Activated naive CD8-positive, alpha-beta T cell treated with anti-CD3 and anti-CD28 coated beads, Interleukin-2, amount 10 ng/mL, durations not matched to agents 7 days and 5 days (primary cell): ENCODE measurements at regions of chr17 and their contacts with region 1.

Region 1: DNA sequence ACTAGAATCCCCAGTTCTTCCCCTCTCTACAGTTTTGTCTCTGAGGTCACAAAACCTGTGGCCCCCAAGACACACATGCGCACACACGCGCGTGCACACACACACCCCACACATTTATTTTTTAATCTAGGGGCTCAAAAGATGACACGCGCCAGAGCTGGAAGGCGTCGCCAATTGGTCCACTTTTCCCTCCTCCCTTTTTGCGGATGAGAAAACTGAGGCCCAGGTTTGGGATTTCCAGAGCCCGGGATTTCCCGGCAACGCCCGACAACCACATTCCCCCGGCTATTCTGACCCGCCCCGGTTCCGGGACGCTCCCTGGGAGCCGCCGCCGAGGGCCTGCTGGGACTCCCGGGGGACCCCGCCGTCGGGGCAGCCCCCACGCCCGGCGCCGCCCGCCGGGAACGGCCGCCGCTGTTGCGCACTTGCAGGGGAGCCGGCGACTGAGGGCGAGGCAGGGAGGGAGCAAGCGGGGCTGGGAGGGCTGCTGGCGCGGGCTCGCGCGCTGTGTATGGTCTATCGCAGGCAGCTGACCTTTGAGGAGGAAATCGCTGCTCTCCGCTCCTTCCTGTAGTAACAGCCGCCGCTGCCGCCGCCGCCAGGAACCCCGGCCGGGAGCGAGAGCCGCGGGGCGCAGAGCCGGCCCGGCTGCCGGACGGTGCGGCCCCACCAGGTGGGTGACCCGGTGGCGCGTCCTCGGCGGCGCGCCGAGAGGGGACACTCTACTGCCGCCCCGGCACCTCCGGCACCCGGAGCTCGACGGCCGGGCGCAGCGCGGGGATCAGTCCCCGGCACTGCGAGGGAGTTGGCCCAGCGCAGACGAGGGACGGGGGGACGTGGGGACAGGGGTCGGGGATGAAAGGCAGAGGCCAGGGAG is at the start of gene STAT5A:
- DNase-seq: peak; percentile 85
- ATAC-seq: peak; percentile 84
- H3K4me3 Mint-ChIP-seq: peak within 1 kb of the TSS; percentile 91
- H3K27ac Mint-ChIP-seq: peak within 1 kb of the TSS; percentile 88
- H3K4me1 Mint-ChIP-seq: peaks cover 37% of the 10 kb centered on the region
- H3K27me3 Mint-ChIP-seq: no peaks in the 10 kb centered on the region
- total RNA-seq, gene STAT5A: 125 to 131 TPM

Region 2: DNA sequence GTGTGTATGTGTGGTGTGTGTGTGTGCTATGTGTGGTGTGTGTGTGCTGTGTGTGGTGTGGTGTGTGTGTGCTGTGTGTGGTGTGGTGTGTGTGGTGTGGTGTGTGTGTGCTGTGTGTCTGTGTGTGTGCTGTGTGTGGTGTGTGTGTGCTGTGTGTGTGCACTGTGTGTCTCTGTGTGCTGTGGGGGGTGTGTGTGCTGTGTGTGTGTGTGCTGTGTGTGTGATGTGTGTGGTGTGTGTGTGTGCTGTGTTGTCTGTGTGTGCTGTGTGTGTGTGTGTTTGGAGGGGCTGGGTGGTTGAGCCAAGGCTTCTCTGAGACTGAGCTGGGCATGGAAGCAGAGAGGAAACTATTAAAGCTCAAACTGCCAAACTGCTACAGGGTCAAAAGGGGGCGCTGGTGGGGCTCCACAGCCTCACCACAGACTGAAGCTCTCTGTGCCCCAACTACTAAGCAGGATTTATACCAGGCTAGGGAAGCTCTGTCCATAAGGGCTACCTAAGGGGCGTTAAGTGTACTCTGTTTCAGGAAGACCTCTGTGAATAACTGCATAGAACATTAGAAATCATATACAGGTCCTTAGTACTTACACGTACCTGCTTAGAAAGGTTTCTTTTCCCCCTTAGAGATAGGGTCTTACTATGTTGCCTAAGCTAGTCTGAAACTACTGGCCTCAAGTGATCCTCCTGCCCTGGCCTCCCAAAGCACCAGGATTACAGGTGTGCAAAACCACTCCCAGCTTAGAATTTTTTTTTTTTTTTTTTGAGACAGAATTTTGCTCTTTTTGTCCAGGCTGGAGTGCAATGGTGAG is 66.0 kb before region 1 on chr17:
- POLR2A ChIA-PET with region 1: interaction called, 21 read pairs
- DNase-seq: peak; percentile 59
- ATAC-seq: peak; percentile 87
- H3K4me3 Mint-ChIP-seq: no peak overlapping the region
- H3K27ac Mint-ChIP-seq: peak overlapping the region; percentile 71
- H3K4me1 Mint-ChIP-seq: peaks cover 7% of the 10 kb centered on the region
- H3K27me3 Mint-ChIP-seq: no peaks in the 10 kb centered on the region

Region 3: DNA sequence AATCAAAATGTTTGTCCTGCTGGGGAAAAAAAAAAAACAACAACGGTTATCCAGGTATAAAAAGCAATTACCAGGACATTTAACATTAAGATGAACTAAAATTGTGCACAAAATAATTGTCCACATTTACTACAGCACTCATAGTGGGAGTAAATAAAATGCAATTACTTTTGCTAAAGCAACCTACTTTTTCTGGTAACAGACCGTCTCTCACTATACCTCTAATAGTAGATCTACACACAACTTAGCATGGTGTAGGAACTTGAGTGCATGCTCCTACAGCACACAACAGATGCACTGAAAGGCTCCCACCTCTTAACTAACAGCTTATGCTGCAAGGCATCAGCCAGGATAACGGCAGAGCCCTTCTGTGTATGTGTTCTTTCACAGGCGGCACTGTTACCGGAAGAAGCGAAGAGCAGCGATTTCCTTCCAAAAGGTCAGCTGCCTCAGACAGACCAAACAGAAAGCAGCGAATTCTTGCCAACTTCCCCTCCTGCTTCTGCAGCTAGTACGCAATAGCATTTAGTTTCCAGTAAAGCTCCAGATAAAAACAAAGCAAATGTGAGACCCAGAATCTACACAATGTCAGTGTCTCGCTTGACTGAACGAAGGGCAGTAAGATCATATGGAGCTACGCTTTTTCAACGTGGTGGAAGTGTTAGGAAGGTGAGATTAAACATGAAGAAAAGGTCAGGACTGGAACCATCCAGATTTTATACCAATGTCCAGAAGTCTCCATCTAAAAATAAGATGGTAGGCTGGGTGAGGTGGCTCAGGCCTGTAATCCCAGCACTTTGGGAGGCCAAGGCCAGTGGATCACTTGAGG is 39.6 kb before region 1 on chr17:
- POLR2A ChIA-PET with region 1: interaction called, 37 read pairs
- DNase-seq: peak; percentile 59
- ATAC-seq: peak; percentile 96
- H3K4me3 Mint-ChIP-seq: peak overlapping the region; percentile 94
- H3K27ac Mint-ChIP-seq: peak overlapping the region; percentile 98
- H3K4me1 Mint-ChIP-seq: peaks cover 52% of the 10 kb centered on the region
- H3K27me3 Mint-ChIP-seq: no peaks in the 10 kb centered on the region

Region 4: GRCh38 chr17:42276359-42276608 is 11.9 kb before region 1 on chr17 and contains the start of gene STAT5B:
- POLR2A ChIA-PET with region 1: interaction called, 108 read pairs
- DNase-seq: peak; percentile 91
- ATAC-seq: peak; percentile 72
- H3K4me3 Mint-ChIP-seq: peak within 1 kb of the TSS; percentile 91
- H3K27ac Mint-ChIP-seq: peak within 1 kb of the TSS; percentile 91
- H3K4me1 Mint-ChIP-seq: peaks cover 41% of the 10 kb centered on the region
- H3K27me3 Mint-ChIP-seq: no peaks in the 10 kb centered on the region
- total RNA-seq, gene STAT5B: 131 to 134 TPM

Region 5: DNA sequence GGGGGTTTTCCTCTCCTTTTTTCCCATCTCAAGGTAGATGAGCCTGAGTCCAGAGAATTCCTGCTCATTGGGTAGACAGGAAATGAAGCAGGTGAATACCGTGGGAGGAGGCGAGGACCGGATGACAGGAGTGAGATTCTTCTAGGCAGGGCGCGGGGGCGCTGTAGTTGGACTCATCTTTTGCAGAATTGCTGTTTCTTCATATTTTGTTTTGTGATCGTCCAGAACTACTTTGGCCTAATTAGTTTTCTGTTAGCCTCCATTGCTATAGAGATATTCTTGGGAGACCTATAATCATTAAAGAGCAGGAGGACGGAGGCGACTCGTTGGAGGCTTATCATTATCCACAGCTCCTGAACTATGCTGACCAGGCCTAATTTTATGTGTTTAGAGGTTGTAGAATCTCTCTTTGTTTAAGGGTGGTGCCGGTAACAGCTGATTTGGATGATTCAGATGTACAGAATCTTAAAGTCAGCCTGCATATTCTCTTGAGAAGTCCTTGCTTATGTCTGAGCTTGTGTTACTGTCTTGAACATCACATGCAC is 171.2 kb after region 1 on chr17:
- POLR2A ChIA-PET with region 1: no interaction called
- DNase-seq: no peak
- ATAC-seq: no peak
- H3K4me3 Mint-ChIP-seq: peak overlapping the region; percentile 85
- H3K27ac Mint-ChIP-seq: peak overlapping the region; percentile 76
- H3K4me1 Mint-ChIP-seq: peaks cover 34% of the 10 kb centered on the region
- H3K27me3 Mint-ChIP-seq: peaks cover 6% of the 10 kb centered on the region